Lower leg skin (tissue), 4 donors: ENCODE measurements at regions of chr21 and their contacts with region 1.

Region 1: GRCh38 chr21:43667191-43667904 is 8.0 kb downstream of the RRP1B start:
- DNase-seq: peak in 1 of 2 donors; percentile 23
- H3K4me3 ChIP-seq: no peak overlapping the region
- CTCF ChIP-seq: no peak
- POLR2A ChIP-seq: no peak

Region 2: GRCh38 chr21:43646550-43647260 is 20.6 kb before region 1 on chr21:
- intact Hi-C with region 1: no loop called
- DNase-seq: peak; percentile 92 to 98
- H3K4me3 ChIP-seq: no peak overlapping the region
- CTCF ChIP-seq: peak in 2 of 3 donors; percentile 76 to 98
- POLR2A ChIP-seq: no peak

Region 3: GRCh38 chr21:43728467-43729390 is 61.4 kb after region 1 on chr21:
- intact Hi-C with region 1: loop called (anchors 10 kb)
- DNase-seq: peak; percentile 92 to 98
- H3K4me3 ChIP-seq: no peak overlapping the region
- CTCF ChIP-seq: peak in 1 of 3 donors; percentile 86
- POLR2A ChIP-seq: no peak

Region 4: DNA sequence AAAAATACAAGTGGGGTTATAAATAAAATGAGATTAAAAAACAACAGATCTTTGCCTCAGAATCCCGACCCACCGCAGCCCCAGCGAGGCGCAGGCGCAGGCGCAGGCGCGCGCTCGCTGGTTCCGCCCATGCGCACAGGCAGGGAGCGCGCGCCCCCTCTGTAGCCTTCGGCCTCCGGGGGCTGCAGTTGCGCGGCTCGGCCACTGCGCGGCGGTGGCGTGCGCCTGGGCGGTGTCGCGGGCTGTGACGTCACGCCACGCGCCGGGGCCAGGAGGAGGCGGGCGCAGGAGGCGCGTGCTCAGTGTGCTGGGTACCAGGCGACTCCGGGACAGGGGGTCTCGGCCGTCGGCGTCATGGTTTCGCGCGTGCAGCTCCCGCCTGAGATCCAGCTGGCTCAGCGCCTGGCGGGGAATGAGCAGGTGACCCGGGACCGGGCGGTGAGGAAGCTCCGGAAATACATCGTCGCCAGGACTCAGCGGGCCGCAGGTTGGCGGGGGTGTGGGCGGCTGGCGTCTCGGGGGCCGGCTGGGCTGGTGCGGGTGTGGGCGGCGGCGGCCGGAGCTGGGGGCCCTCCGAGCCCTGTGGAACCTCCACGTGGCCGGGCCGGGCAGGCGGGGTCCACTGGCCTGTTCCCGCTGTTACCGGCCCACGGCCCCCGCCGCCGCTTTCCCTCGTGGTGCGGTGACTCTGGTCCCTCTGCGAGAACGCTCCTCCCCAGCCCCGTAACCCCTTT is 122.1 kb after region 1 on chr21 and contains the start of gene RRP1:
- intact Hi-C with region 1: loop called (anchors 10 kb)
- DNase-seq: peak; percentile 84 to 97
- H3K4me3 ChIP-seq: peak within 1 kb of the TSS; percentile 77
- CTCF ChIP-seq: peak; percentile 24 to 100 (median 88)
- POLR2A ChIP-seq: no peak
- total RNA-seq, gene RRP1: 19.5 to 43.2 (median 25.5) TPM